Panc1 (cell line): ENCODE measurements at regions of chr6 and their contacts with region 1.

Region 1: GRCh38 chr6:89805814-89806371 is 13.7 kb downstream of the MDN1 start:
- DNase-seq: no peak
- ATAC-seq: no peak
- H3K4me3 ChIP-seq: no peak overlapping the region
- H3K27ac ChIP-seq: no peak overlapping the region
- H3K4me1 ChIP-seq: no peaks in the 10 kb centered on the region
- H3K27me3 ChIP-seq: no peaks in the 10 kb centered on the region
- CTCF ChIP-seq: no peak

Region 2: DNA sequence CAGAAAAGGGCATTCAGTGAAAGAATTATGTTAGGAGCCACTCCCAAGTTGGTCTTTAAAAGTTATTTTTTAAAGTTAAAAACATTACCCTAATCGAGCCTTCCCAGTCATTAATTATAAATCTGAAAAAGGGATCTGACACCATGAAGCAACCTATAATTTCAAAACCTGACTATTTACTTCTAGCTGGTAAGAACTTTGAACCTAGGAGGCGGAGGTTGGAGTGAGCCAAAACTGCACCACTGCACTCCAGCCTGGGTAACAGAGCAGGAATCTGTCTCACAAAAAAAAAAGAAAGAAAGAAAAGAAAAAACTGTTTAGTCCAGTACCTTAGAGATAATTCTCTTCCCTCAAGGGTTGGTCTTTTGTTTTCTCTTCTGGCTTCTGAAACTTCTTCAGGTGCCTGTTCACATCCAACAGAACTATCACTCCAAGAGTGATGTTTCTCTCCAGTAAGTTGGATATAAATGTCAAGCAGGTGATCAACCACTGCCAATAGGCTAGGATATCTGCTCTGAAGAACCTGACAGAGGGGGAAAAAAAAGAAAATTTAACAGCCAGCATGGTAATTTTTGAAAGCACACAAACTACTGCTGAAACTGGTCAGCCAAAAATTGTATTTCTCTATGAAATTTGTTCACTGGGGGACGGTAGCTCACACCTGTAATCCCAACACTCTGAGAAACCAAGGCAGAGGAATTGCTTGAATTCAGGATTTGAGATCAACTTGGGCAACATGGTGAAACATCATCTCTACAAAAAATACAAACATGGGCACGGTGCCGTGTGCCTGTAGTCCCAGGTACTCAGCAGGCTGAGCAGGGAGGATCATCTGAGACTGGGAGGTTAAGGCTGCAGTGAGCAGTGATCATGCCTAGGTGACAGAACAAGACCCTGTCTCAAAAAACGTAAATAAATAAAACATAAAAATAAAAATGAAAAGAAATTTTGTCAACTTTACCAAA is 24.5 kb before region 1 on chr6:
- CTCF ChIA-PET with region 1: no interaction called
- POLR2A ChIA-PET with region 1: interaction called, 17 read pairs
- in situ Hi-C with region 1: no loop called
- intact Hi-C with region 1: no loop called
- DNase-seq: no peak
- ATAC-seq: no peak
- H3K4me3 ChIP-seq: no peak overlapping the region
- H3K27ac ChIP-seq: no peak overlapping the region
- H3K4me1 ChIP-seq: no peaks in the 10 kb centered on the region
- H3K27me3 ChIP-seq: no peaks in the 10 kb centered on the region
- CTCF ChIP-seq: no peak

Region 3: GRCh38 chr6:89819336-89820130 is 13.6 kb after region 1 on chr6 and contains the start of gene MDN1:
- CTCF ChIA-PET with region 1: no interaction called
- POLR2A ChIA-PET with region 1: interaction called, 11 read pairs
- in situ Hi-C with region 1: no loop called
- intact Hi-C with region 1: no loop called
- DNase-seq: peak; percentile 82
- ATAC-seq: peak; percentile 99
- H3K4me3 ChIP-seq: peak within 1 kb of the TSS; percentile 80 to 98
- H3K27ac ChIP-seq: peak within 1 kb of the TSS; percentile 82
- H3K4me1 ChIP-seq: peaks cover 19% of the 10 kb centered on the region
- H3K27me3 ChIP-seq: no peaks in the 10 kb centered on the region
- CTCF ChIP-seq: no peak
- total RNA-seq, gene MDN1: 47.8 TPM